Activated T-helper 1 cell treated with anti-CD3 and anti-CD28 coated beads, Interleukin-12 subunit alpha, Interleukin-12 subunit beta, Interleukin-2, Interleukin-4 antibody, amounts not matched to agents 30 ng/mL and 10 ng/mL and 1 ng/mL, durations not matched to agents 14 hours and 24 hours and 36 hours (primary cell): ENCODE measurements at regions of chr6 and their contacts with region 1.

Region 1: GRCh38 chr6:30212865-30213666 is at the start of gene TRIM26:
- DNase-seq: peak; percentile 98
- H3K4me3 Mint-ChIP-seq: peak within 1 kb of the TSS; percentile 88
- H3K27ac Mint-ChIP-seq: peak within 1 kb of the TSS; percentile 97
- H3K4me1 Mint-ChIP-seq: peaks cover 57% of the 10 kb centered on the region
- H3K27me3 Mint-ChIP-seq: no peaks in the 10 kb centered on the region
- total RNA-seq, gene TRIM26: 61.6 and 64.7 TPM in 2 replicates

Region 2: DNA sequence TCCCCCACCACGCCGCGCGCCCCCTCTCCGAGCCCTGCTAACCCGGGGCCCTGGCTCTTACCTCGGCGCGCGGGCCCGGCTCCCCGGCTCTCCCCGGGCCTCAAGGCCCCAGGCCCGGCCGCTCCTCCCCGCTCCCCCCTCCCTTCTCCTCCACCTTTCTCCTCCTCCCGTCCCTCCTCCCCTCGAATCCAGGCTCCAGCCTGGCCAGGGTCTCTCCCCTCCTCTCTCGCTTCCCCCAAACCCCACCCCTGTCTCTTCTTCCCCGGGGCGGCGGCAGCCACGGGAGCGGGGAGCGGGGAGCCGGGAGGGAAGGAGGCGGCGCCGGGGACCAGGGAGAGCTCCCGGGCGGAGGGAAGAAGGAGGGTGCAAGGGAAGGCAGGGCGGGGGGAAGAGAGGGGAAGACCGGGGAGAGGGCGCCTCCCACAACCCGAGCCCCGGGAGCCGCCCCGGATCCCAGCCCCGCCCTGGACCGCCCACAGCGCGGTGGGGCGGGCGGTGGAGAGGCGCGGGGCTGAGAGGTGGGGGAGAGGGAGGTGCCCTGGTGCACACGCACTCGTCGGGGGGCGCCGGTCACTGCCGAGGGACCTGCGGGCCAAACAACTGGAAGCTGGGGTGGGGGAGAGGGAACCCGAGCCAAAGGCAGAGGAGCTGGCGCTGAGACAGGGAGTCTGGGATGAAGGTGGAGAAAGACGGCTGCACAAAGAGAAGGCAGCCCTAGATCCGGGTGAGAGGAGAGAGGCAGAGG is 580.1 kb before region 1 on chr6 and contains the start of gene GABBR1:
- intact Hi-C with region 1: no loop called
- DNase-seq: peak; percentile 78
- H3K4me3 Mint-ChIP-seq: peak within 1 kb of the TSS; percentile 91
- H3K27ac Mint-ChIP-seq: peak within 1 kb of the TSS; percentile 84
- H3K4me1 Mint-ChIP-seq: peaks cover 44% of the 10 kb centered on the region
- H3K27me3 Mint-ChIP-seq: peaks cover 30% of the 10 kb centered on the region
- total RNA-seq, gene GABBR1: 19.8 and 22.6 TPM in 2 replicates

Region 3: GRCh38 chr6:30169658-30170614 is 43.1 kb before region 1 on chr6:
- intact Hi-C with region 1: loop called (anchors 1 kb)
- DNase-seq: no peak
- H3K4me3 Mint-ChIP-seq: no peak overlapping the region
- H3K27ac Mint-ChIP-seq: no peak overlapping the region
- H3K4me1 Mint-ChIP-seq: peaks cover 46% of the 10 kb centered on the region
- H3K27me3 Mint-ChIP-seq: peaks cover 39% of the 10 kb centered on the region

Region 4: DNA sequence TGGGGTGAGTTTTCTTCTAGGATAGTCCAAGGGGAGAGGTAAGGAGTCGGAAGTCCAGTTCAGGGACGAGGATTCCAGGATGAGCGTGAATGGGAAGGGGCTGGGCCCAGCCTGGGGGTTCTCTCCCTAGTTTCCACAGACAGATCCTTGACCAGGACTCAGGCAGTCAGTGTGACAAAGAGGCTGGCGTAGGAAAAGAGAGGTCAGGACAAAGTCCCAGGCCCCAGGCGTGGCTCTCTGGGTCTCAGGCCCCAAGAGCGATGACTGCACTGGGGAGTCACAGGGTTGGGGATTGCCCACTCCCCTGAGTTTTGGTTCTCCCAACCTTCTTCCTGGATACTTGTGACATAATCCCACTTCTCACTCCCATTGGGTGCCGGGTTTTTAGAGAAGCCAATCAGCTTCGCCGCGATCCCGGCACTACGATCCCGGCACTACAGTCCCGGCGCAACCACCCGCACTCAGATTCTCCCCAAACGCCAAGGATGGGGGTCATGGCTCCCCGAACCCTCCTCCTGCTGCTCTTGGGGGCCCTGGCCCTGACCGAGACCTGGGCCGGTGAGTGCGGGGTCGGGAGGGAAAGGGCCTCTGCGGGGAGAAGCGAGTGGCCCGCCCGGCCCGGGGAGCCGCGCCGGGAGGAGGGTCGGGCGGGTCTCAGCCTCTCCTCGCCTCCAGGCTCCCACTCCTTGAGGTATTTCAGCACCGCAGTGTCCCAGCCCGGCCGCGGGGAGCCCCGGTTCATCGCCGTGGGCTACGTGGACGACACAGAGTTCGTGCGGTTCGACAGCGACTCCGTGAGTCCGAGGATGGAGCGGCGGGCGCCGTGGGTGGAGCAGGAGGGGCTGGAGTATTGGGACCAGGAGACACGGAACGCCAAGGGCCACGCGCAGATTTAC is 46.3 kb after region 1 on chr6:
- intact Hi-C with region 1: loop called (anchors 1 kb)
- DNase-seq: peak; percentile 65
- H3K4me3 Mint-ChIP-seq: peak overlapping the region; percentile 87
- H3K27ac Mint-ChIP-seq: peak overlapping the region; percentile 79
- H3K4me1 Mint-ChIP-seq: peaks cover 15% of the 10 kb centered on the region
- H3K27me3 Mint-ChIP-seq: peaks cover 19% of the 10 kb centered on the region

Region 5: DNA sequence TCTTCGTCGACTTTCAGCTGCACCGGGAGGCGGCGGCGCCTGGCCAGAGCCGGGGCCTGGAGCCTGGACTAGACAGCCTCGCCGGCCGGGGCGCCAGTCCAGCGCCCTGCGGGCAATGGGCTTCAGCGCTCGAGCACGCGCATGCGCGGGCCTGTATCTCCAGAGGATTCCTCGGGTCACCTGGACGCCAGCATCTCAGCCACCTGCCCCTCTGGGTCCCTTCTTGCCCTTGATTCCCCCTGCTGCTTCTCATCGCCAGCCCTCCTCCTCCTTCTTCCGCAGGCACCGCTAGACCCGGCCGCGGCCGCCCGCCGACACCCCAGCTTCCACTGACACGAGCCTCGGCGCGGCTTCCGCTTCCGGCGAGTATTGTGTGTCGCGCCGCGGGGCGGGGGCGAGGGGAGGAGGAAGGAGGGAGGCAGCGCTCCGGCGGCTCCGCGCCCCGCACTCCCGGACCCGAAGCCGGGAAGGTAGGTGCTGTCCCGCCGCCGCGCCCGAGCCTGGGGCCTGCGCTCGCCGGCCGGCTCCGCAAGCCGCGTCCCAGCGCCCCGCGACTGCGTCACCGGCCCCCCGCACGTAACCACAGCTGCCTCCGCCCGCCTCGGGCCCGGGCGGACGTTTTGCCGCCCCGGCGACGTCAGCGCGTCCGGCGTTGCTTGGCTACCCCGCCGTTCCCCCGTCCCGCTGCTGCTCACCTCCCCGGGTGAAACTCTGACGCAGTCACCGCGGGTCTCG is 113.6 kb after region 1 on chr6 and contains the start of gene TRIM39:
- intact Hi-C with region 1: loop called (anchors 1 kb)
- DNase-seq: peak; percentile 85
- H3K4me3 Mint-ChIP-seq: peak within 1 kb of the TSS; percentile 99
- H3K27ac Mint-ChIP-seq: peak within 1 kb of the TSS; percentile 100
- H3K4me1 Mint-ChIP-seq: peaks cover 54% of the 10 kb centered on the region
- H3K27me3 Mint-ChIP-seq: no peaks in the 10 kb centered on the region
- total RNA-seq, gene TRIM39: 14.2 and 15.6 TPM in 2 replicates

Region 6: DNA sequence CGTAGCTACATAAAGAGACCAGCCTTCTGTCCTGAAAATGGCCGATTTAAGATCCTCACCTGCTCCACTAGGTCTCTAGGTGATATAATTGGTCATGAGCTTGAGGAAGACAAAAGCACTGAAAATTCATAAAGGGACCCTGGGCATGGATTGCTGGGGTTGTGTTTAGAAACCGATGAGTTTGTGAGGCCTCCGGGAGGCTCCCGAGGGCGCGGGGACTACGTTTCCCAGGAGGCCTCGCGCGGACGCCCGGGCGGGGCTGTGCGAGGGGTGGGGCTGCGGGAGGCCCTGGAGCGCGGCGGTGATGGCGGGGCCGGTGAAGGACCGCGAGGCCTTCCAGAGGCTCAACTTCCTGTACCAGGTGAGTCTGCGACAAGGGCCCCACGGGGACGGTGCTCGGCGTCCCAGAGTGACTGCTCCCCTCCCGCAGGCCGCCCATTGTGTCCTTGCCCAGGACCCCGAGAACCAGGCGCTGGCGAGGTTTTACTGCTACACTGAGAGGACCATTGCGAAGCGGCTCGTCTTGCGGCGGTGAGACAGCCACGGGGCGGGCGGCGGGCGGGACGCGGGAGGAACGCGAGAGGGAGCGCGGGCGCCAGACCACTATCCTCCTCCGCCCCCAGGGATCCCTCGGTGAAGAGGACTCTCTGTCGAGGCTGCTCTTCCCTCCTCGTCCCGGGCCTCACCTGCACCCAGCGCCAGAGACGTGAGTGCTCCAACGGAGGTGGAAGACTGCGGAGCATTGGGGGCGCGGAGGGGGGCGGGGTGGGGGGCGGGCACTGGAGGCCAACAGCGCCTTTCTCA is 132.0 kb after region 1 on chr6 and contains the start of gene RPP21:
- intact Hi-C with region 1: loop called (anchors 1 kb)
- DNase-seq: peak; percentile 84
- H3K4me3 Mint-ChIP-seq: peak within 1 kb of the TSS; percentile 91
- H3K27ac Mint-ChIP-seq: peak within 1 kb of the TSS; percentile 80
- H3K4me1 Mint-ChIP-seq: peaks cover 39% of the 10 kb centered on the region
- H3K27me3 Mint-ChIP-seq: peaks cover 5% of the 10 kb centered on the region
- total RNA-seq, gene RPP21: 54.2 and 62.8 TPM in 2 replicates

Region 7: DNA sequence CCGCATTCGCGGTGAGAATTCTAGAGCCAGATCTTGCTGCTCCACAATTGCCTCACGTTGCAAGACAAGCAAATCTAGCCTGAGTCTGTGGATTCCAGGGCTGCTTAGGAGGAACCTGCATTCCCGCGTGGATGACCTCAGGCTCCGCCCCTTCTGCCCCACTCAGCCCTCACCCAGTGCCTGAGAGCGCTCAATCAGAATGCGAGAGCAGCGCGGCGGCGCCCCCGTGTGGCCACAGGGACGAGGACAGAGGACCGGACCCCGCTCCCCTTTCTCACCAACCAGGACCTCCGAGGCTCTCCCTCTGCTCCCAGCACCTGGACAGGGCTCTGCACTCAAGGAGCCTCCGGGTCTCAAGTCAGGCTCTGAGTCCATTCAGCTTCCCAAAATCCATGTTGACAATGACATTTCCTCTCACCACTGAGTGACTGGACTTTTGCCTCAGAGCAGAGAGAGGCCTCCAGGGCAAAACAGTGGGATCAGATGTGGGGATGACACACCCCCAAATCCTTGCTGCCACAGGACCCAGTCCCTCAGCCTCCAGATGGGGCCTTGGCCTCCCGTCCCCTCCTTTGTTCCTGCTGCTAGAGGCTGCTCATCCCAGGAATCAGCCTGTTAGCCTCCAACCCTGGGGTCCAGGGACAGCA is 183.9 kb after region 1 on chr6:
- intact Hi-C with region 1: loop called (anchors 1 kb)
- DNase-seq: peak; percentile 74
- H3K4me3 Mint-ChIP-seq: no peak overlapping the region
- H3K27ac Mint-ChIP-seq: no peak overlapping the region
- H3K4me1 Mint-ChIP-seq: peaks cover 11% of the 10 kb centered on the region
- H3K27me3 Mint-ChIP-seq: peaks cover 41% of the 10 kb centered on the region

Region 8: DNA sequence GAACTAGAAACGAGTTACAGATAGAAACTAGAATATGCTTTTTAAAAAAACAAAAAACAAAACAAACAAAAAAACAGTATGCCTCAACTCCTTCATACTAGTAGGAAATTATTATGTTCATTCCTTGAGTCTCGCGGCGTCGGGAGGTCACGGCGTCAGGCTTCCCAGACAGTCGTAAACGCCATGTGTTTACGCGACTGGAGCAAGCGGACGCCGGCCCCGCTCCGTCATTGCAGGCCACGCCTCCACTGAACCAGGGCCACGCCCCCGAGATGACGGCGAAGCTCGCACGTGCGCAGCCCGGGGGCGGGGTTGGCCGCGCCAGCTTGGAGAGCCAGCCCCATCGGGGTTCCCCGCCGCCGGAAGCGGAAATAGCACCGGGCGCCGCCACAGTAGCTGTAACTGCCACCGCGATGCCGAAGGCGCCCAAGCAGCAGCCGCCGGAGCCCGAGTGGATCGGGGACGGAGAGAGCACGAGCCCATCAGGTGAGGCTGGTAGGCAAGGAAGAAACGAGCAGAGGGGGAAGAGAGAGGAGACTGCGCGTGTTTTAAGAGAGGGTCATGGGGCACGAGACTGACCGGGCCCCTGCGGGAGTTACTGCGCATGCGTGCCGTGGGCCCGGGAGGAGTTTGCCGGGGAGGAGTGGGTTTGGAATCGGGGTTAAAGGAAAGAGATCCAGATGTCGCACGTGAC is 358.2 kb after region 1 on chr6 and contains the start of gene ABCF1:
- intact Hi-C with region 1: no loop called
- DNase-seq: peak; percentile 100
- H3K4me3 Mint-ChIP-seq: peak within 1 kb of the TSS; percentile 98
- H3K27ac Mint-ChIP-seq: peak within 1 kb of the TSS; percentile 98
- H3K4me1 Mint-ChIP-seq: peaks cover 62% of the 10 kb centered on the region
- H3K27me3 Mint-ChIP-seq: no peaks in the 10 kb centered on the region
- total RNA-seq, gene ABCF1: 115 and 120 TPM in 2 replicates

Region 9: GRCh38 chr6:30814136-30815040 is 601.3 kb after region 1 on chr6:
- intact Hi-C with region 1: no loop called
- DNase-seq: peak; percentile 47
- H3K4me3 Mint-ChIP-seq: peak overlapping the region; percentile 72
- H3K27ac Mint-ChIP-seq: peak overlapping the region; percentile 99
- H3K4me1 Mint-ChIP-seq: peaks cover 86% of the 10 kb centered on the region
- H3K27me3 Mint-ChIP-seq: peaks cover 1% of the 10 kb centered on the region